Gastrocnemius medialis (tissue), 4 donors: ENCODE measurements at regions of chr1 and their contacts with region 1.

Region 1: DNA sequence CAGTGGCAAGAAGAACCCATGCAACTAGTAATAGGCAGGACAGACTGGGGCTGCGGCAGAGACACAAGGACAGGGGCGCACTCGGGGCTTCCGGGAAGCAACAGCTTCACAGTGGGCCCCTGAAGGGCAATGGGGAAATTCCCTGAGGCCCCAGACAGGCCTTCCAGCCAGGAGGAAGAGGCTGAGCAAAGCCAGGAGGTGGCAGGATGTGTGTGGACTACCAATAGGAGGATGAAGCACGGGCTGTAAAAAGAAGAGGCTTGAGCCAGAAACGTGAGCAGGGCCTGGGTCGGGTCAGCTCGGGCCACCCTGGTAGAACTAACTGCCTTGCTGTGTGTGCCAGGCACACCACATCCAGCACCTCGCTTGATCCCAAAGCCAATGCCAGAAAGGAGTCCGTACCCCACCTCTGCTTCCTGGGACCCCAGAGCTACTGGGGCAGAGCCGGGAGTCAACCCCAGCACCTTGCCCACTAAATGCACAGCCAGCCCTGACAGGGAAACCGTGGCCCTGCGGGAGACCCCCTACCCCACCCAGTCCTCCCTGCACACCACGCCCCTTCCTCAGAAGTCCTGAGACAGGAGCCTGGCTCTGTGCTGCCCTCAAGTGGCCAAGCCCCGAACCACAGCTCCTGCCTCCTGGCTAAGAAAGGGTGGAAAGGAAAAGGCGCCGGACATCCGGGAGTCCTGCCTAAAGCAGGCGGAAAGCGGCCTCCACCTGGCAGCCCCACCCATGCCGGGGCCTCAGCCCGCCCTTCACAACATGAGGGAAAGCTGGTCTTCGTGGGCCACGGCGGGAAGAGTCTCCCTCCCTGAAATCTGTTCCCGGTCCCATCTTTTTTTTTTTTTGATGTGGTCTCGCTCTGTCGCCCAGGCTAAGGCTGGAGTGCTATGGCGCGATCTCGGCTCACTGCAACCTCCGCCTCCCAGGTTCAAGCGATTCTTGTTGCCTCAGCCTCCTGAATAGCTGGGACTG is 33.7 kb downstream of the TTC39A start:
- DNase-seq: peak; percentile 57 to 80
- ATAC-seq: peak; percentile 73 to 80
- H3K4me3 ChIP-seq: peak overlapping the region; percentile 54 to 71 (median 66)
- H3K27ac ChIP-seq: peak overlapping the region in 1 of 4 donors; percentile 35
- H3K4me1 ChIP-seq: peaks cover 5 to 12% of the 10 kb centered on the region in 2 donors
- H3K27me3 ChIP-seq: no peaks in the 10 kb centered on the region
- CTCF ChIP-seq: peak; percentile 85 to 98 (median 93)
- POLR2A ChIP-seq: no peak

Region 2: GRCh38 chr1:51192213-51192843 is 104.3 kb before region 1 on chr1:
- in situ Hi-C with region 1: loop called in 1 of 4 experiments (anchors 25 kb)
- intact Hi-C with region 1: loop called (anchors 2 kb)
- DNase-seq: peak; percentile 8 to 24
- ATAC-seq: no peak
- H3K4me3 ChIP-seq: no peak overlapping the region
- H3K27ac ChIP-seq: no peak overlapping the region
- H3K4me1 ChIP-seq: no peaks in the 10 kb centered on the region
- H3K27me3 ChIP-seq: no peaks in the 10 kb centered on the region
- CTCF ChIP-seq: peak; percentile 33 to 81 (median 60)
- POLR2A ChIP-seq: no peak

Region 3: GRCh38 chr1:51218570-51218969 is 78.1 kb before region 1 on chr1:
- in situ Hi-C with region 1: no loop called
- intact Hi-C with region 1: loop called (anchors 1 kb)
- DNase-seq: no peak
- ATAC-seq: no peak
- H3K4me3 ChIP-seq: no peak overlapping the region
- H3K27ac ChIP-seq: no peak overlapping the region
- H3K4me1 ChIP-seq: no peaks in the 10 kb centered on the region
- H3K27me3 ChIP-seq: no peaks in the 10 kb centered on the region
- CTCF ChIP-seq: no peak
- POLR2A ChIP-seq: no peak

Region 4: DNA sequence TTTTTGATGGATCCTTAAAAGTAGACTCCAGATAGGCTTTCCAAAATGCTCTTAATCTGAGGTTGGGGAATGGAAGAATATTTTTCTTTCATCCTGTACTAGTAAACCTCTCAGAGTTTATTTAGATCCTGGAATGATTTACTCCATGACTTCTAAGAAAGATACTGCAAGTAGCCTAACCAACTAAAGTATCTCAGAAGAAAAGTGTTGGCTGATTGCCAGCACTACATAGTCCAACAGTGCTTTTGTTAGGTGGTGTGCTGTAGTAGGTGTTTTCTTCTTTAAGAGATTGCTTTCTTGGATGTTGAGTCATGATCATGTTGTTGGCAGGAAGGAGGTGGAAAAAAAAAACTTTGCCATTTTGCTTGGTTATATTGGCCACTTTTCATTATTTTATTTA is 440.0 kb after region 1 on chr1:
- in situ Hi-C with region 1: no loop called
- intact Hi-C with region 1: no loop called
- DNase-seq: peak in 1 of 2 donors; percentile 32
- ATAC-seq: peak; percentile 81 to 82
- H3K4me3 ChIP-seq: peak overlapping the region; percentile 4 to 28 (median 21)
- H3K27ac ChIP-seq: peak overlapping the region; percentile 70 to 84 (median 76)
- H3K4me1 ChIP-seq: peaks cover 69 to 85% of the 10 kb centered on the region in 2 donors
- H3K27me3 ChIP-seq: no peaks in the 10 kb centered on the region
- CTCF ChIP-seq: no peak
- POLR2A ChIP-seq: no peak